ENCODE measurements at regions of chrX and their contacts with region 1.

Region 1: DNA sequence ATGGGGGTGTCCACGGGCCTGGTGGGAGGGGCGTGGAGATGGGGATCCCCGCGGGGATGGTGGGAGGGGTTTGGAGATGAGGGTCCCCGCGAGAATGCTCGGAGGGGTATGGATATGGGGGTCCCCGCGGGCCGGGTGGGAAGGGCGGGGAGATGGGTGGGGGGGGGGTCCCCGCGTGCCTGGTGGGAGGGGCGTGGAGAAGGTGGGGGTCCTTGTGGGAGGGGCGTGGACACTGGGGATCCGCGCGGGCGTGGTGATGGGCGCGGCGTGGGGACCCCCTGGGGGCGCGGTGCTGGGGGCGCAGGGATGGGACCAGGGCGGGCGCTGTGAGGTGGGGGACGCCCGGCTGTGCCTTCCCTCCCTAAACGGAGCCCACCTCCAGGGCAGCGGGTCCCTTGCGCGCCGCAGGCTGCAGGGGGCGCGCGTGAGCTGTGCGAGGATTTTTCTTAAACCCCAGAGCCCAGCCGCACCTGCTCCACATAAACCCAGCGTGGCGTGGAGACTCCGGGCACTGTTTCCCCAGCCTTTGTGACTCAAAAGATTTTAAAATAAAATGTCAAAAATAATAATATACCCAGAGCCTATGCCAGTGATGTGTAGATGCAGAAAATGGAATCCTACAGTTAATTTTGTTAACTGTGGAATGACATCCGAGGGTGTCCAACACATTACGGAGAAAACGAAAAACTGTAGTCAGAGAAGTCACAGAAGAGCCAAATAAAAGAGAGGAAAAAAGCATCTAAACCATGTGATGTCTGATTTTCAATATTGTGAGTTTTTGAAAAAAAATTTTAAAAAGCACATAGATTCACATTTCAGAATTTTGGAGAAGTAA is 1.5 kb upstream of the ASMTL start:
- DNase-seq: peak; percentile 83
- H3K4me3 Mint-ChIP-seq: peak overlapping the region; percentile 60
- H3K27ac Mint-ChIP-seq: no peak overlapping the region
- H3K4me1 Mint-ChIP-seq: peaks cover 9% of the 10 kb centered on the region
- H3K27me3 Mint-ChIP-seq: no peaks in the 10 kb centered on the region

Region 2: DNA sequence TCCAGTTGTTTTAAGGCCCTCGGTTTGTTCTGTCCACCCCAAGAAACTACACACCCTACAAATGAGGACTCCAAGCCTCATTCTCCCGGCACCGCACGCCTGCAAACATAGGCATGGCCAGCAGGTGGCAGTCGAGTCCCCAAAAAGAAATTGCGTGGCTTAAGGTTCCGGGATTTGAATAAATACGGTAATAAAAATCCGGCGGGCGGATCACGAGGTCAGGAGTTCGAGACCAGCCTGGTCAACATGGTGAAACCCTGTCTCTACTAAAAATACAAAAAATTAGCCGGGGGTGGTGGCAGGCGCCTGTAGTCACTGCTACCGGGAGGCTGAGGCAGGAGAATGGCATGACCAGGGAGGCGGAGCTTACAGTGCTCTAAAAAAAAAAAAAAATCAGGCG is 207.4 kb before region 1 on chrX:
- intact Hi-C with region 1: loop called (anchors 2 kb)
- DNase-seq: peak; percentile 76
- H3K4me3 Mint-ChIP-seq: no peak overlapping the region
- H3K27ac Mint-ChIP-seq: peak overlapping the region; percentile 46
- H3K4me1 Mint-ChIP-seq: peaks cover 25% of the 10 kb centered on the region
- H3K27me3 Mint-ChIP-seq: peaks cover 4% of the 10 kb centered on the region

Region 3: DNA sequence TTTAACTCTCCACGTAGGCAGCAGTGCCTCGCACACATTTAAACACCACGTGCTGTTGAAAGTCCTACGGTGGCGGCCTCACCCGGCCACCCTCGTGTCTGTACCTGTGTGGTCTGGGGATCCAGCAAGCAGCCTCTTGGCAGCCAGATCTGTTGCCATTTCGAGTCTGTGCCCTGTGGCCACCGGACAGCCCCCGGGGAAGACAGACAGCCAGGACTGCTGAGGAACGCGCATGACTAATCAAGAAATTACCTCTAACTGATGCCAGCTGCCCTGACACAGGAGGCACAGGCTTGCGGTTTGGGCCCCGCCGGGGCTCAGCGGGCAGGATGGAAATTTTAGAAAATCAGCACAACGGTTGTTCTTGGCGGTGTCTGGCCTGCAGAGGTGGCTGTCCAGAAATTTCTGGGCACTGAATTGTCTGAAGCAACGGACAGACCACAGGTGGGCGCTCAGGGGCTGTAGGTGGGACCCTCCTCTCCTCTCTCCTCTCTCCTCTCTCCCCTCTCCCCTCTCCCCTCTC is 14.1 kb after region 1 on chrX:
- intact Hi-C with region 1: no loop called
- DNase-seq: peak; percentile 72
- H3K4me3 Mint-ChIP-seq: peak overlapping the region; percentile 60
- H3K27ac Mint-ChIP-seq: peak overlapping the region; percentile 94
- H3K4me1 Mint-ChIP-seq: peaks cover 72% of the 10 kb centered on the region
- H3K27me3 Mint-ChIP-seq: no peaks in the 10 kb centered on the region

Region 4: GRCh38 chrX:1580735-1581531 is 126.8 kb after region 1 on chrX:
- intact Hi-C with region 1: loop called (anchors 1 kb)
- DNase-seq: peak; percentile 69
- H3K4me3 Mint-ChIP-seq: no peak overlapping the region
- H3K27ac Mint-ChIP-seq: peak overlapping the region; percentile 3
- H3K4me1 Mint-ChIP-seq: peaks cover 15% of the 10 kb centered on the region
- H3K27me3 Mint-ChIP-seq: no peaks in the 10 kb centered on the region

Region 5: DNA sequence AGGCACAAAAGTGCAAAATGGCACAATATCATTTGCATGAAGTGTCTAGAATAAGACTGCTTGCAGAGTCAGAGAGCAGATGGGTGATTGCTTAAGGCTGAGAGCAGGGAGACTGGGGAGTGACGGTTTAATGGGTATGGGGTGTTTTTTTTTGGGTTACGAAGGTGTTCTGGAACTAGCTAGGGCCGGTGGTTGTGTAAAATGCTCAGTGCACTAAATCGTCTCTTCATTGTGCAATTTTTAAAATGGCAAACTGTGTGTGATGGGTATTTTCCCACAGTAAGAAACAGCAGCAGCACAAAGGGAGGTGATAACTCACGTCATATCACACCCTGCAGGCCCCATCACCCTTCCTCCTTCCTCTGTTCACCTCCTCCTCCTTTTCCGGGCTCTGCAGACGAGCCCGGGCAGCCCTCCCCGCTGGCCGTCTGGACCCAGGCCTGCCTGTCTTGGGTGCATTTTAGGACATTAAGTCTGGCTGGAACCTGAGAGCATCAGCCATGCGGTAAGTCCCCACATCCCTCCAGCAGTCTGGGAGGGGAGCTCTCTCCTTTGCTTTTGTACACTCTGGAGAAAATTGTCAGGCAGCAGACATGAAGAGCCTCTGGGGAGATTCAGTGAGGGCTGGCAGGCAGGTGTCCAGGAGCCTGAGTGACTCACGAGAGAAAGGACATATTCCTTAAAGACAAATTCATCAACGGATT is 203.4 kb after region 1 on chrX:
- intact Hi-C with region 1: loop called (anchors 1 kb)
- DNase-seq: peak; percentile 51
- H3K4me3 Mint-ChIP-seq: peak overlapping the region; percentile 89
- H3K27ac Mint-ChIP-seq: peak overlapping the region; percentile 98
- H3K4me1 Mint-ChIP-seq: peaks cover 27% of the 10 kb centered on the region
- H3K27me3 Mint-ChIP-seq: no peaks in the 10 kb centered on the region

Region 6: DNA sequence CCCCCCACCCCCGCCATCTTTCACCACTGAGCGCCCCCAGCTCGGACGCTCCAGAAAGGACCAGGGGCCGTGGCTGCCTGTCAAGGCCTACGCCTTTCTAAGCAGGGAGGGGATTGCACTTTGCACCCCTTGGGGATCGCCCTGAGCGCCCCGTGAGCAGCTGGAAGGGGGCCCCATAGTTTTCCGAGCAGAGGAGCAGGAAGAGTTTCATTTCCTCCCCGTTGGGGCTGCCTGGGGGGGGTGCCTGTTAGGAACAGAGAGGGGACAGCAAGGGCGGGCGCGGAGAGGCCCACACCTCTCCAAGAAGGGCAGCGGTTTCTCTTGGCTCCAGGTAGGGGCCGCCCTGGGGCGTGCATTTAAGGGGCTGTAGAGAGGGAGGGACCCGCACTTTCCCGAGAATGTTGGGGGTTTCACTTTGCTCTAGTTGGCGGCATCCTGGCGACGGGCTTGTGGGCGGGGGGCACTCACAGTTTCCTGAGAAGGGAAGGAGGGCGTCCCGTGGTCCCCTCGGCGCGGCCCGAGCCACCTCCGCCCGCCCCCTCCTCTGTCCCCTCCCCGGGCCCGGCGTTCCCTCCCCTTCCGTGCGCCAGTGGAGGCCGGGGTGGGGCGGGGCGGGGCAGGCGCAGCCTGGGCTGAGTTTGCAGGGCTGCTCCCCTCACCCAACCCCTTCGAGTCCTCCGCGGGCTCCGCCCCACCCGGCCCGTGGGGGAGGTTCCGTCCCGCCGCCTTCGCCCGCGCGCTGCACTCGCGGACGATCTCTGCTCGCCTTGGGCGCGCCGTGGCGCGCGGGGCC is 1154.7 kb after region 1 on chrX:
- intact Hi-C with region 1: loop called (anchors 10 kb)
- DNase-seq: peak; percentile 87
- H3K4me3 Mint-ChIP-seq: peak overlapping the region; percentile 95
- H3K27ac Mint-ChIP-seq: peak overlapping the region; percentile 89
- H3K4me1 Mint-ChIP-seq: peaks cover 37% of the 10 kb centered on the region
- H3K27me3 Mint-ChIP-seq: no peaks in the 10 kb centered on the region

Measured in activated T-helper 2 cell treated with anti-CD3 and anti-CD28 coated beads, Interferon-gamma antibody, Interleukin-2, Interleukin-4, amounts not matched to agents 10 μg/mL and 5 μg/mL and 100 μg/mL, durations not matched to agents 14 hours and 24 hours and 36 hours (primary cell).